Activated T-helper 1 cell treated with anti-CD3 and anti-CD28 coated beads, Interleukin-12 subunit alpha, Interleukin-12 subunit beta, Interleukin-2, Interleukin-4 antibody, amounts not matched to agents 30 ng/mL and 10 ng/mL and 1 ng/mL, durations not matched to agents 14 hours and 24 hours and 36 hours (primary cell): ENCODE measurements at regions of chr18 and their contacts with region 1.

Region 1: GRCh38 chr18:12657684-12658425 is at the start of gene SPIRE1:
- DNase-seq: peak; percentile 38
- H3K4me3 Mint-ChIP-seq: peak within 1 kb of the TSS; percentile 84
- H3K27ac Mint-ChIP-seq: peak within 1 kb of the TSS; percentile 47
- H3K4me1 Mint-ChIP-seq: peaks cover 35% of the 10 kb centered on the region
- H3K27me3 Mint-ChIP-seq: peaks cover 27% of the 10 kb centered on the region
- total RNA-seq, gene SPIRE1: 8.8 and 10.9 TPM in 2 replicates

Region 2: DNA sequence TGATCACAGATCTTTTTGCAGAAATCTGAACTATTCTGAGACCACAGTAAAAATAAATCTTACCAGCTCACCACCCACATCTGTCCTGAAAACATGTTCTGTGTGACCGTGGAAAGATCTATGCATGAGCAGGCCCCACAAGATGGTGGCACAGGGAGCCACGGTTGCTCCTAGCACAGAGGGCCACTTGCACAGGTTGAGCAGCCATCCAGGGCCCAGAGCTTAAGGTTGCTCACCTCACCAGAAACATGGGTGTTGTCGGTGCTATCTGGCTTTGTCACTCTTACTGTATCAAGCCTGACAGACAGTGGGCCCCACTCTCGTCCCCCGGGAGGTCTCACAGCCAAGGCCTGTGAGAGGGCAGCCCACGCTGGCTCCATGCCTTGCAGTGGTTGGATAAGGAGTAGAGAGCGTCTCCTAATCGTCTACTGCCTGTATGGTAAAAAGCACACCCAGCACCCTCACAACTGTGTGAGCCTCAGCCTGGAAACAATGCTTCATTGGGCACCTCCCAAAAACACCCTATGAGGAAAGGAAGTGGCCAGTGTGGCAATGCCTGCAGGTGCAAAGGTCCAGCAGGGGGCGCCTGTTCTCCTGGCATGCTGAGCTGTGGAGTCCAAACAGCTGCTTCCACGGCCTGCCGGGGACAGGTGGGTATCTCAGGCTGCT is 330.2 kb before region 1 on chr18:
- intact Hi-C with region 1: loop called (anchors 1 kb)
- DNase-seq: peak; percentile 62
- H3K4me3 Mint-ChIP-seq: no peak overlapping the region
- H3K27ac Mint-ChIP-seq: peak overlapping the region; percentile 27
- H3K4me1 Mint-ChIP-seq: peaks cover 15% of the 10 kb centered on the region
- H3K27me3 Mint-ChIP-seq: no peaks in the 10 kb centered on the region

Region 3: DNA sequence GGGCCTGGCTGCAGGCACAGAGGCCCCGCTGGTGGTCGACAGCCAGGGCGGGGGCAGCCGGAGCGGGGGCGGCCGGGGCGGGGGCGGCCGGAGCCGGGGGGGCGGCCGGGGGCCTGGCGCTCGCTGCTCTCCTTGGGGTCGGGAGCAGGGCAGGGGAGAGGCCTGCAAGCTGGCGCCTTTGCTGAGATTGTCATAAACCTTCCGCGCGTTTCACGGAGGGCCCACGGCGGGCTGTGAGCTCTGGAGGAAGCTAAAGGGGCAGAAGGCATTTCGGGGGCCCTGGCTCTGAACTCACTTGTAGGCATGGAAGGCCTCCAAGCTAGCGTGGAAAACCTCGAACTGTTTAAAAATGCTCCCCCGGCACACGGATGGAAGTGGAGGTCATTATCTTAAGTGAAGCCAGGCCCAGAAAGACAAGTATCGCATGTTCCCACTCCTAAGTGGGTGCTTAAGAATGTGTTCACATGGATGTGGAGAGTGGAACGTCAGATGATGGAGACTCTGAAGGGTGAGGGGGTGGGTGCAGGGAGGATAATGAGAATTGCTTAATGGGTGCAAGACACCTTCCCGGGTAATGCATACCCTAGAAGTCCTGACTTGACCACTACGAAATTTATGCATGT is 249.5 kb before region 1 on chr18:
- intact Hi-C with region 1: loop called (anchors 5 kb)
- DNase-seq: no peak
- H3K4me3 Mint-ChIP-seq: peak overlapping the region; percentile 76
- H3K27ac Mint-ChIP-seq: no peak overlapping the region
- H3K4me1 Mint-ChIP-seq: peaks cover 27% of the 10 kb centered on the region
- H3K27me3 Mint-ChIP-seq: peaks cover 47% of the 10 kb centered on the region

Region 4: DNA sequence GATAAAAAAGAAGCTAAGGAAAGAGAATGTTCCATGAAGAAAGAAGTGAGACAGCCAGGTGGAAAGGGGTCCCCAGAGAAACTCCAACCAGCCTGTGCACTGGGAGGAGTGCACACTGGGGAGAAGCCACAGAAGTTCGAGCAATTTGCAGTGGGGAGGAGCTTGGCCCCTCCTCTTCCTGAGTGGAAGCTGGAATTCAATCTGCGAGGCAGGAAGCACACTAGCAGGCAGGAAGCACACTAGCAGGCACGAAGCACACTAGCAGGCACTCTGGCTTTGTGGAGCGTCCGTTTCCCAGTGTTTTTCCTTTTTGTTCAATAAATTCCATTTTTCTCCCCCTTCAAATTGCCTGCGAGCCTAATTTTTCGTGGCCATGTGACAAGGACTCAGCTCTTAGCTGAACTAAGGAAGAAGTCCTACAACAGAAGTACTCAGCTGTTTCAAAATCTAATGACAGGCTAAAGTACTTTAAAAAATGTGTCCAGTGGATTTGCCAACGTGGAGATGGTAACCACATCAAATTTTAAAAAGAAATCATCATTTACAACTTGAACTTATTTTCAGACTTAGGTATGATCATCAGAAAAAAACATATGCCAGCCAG is 21.4 kb after region 1 on chr18:
- intact Hi-C with region 1: loop called (anchors 1 kb)
- DNase-seq: no peak
- H3K4me3 Mint-ChIP-seq: peak overlapping the region; percentile 30
- H3K27ac Mint-ChIP-seq: peak overlapping the region; percentile 83
- H3K4me1 Mint-ChIP-seq: peaks cover 13% of the 10 kb centered on the region
- H3K27me3 Mint-ChIP-seq: no peaks in the 10 kb centered on the region

Region 5: GRCh38 chr18:12838178-12838634 is 180.4 kb after region 1 on chr18:
- intact Hi-C with region 1: no loop called
- DNase-seq: peak; percentile 16
- H3K4me3 Mint-ChIP-seq: peak overlapping the region; percentile 78
- H3K27ac Mint-ChIP-seq: peak overlapping the region; percentile 92
- H3K4me1 Mint-ChIP-seq: peaks cover 78% of the 10 kb centered on the region
- H3K27me3 Mint-ChIP-seq: no peaks in the 10 kb centered on the region

Region 6: GRCh38 chr18:12929477-12930083 is 271.7 kb after region 1 on chr18:
- intact Hi-C with region 1: no loop called
- DNase-seq: no peak
- H3K4me3 Mint-ChIP-seq: no peak overlapping the region
- H3K27ac Mint-ChIP-seq: no peak overlapping the region
- H3K4me1 Mint-ChIP-seq: peaks cover 3% of the 10 kb centered on the region
- H3K27me3 Mint-ChIP-seq: peaks cover 14% of the 10 kb centered on the region